IMR-90 (cell line): ENCODE measurements at regions of chr20 and their contacts with region 1.

Region 1: GRCh38 chr20:35664544-35665221 is at the starts of genes CPNE1 and RBM12:
- DNase-seq: peak; percentile 91
- ATAC-seq: peak; percentile 90
- H3K4me3 ChIP-seq: peak within 1 kb of the TSS; percentile 86
- H3K27ac ChIP-seq: peak within 1 kb of the TSS; percentile 94
- H3K4me1 ChIP-seq: peaks cover 2% of the 10 kb centered on the region
- H3K27me3 ChIP-seq: no peaks in the 10 kb centered on the region
- CTCF ChIP-seq: no peak
- POLR2A ChIP-seq: peak; percentile 97
- RAD21 ChIP-seq: no peak; the same call in 1 of the 2 replicates
- total RNA-seq, gene CPNE1: 141 and 163 TPM in 2 replicates
- total RNA-seq, gene RBM12: 65.8 and 69.4 TPM in 2 replicates

Region 2: DNA sequence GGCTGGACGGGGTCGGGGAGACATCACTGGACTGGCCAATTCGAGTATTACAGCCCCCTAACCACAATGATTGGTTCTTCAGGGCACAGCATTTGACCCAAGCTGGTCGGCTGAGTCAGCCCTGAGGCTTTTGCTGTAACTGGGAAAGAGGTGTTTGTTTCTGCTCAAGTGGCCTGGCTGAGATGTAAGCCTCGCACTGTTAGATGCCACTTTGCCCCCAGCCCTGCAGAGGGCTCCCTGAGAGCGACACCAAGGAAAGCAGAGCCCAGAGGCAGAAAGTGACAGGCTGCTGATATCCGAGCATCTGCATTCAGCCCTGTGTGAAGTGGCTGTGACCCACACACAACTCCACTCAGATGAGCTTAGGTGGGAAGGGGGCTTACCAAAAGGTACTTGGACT is 103.4 kb before region 1 on chr20:
- CTCF ChIA-PET with region 1: no interaction called
- POLR2A ChIA-PET with region 1: no interaction called
- dilution Hi-C with region 1: no loop called
- in situ Hi-C with region 1: no loop called
- intact Hi-C with region 1: loop called (anchors 10 kb)
- DNase-seq: peak; percentile 59
- ATAC-seq: peak; percentile 96
- H3K4me3 ChIP-seq: no peak overlapping the region
- H3K27ac ChIP-seq: no peak overlapping the region
- H3K4me1 ChIP-seq: peaks cover 2% of the 10 kb centered on the region
- H3K27me3 ChIP-seq: no peaks in the 10 kb centered on the region
- CTCF ChIP-seq: peak; percentile 40
- POLR2A ChIP-seq: no peak
- RAD21 ChIP-seq: peak; percentile 47

Region 3: GRCh38 chr20:35652641-35653429 is 11.8 kb before region 1 on chr20:
- CTCF ChIA-PET with region 1: no interaction called
- POLR2A ChIA-PET with region 1: no interaction called
- dilution Hi-C with region 1: no loop called
- in situ Hi-C with region 1: no loop called
- intact Hi-C with region 1: no loop called
- DNase-seq: no peak
- ATAC-seq: no peak
- H3K4me3 ChIP-seq: no peak overlapping the region
- H3K27ac ChIP-seq: no peak overlapping the region
- H3K4me1 ChIP-seq: peaks cover 9% of the 10 kb centered on the region
- H3K27me3 ChIP-seq: no peaks in the 10 kb centered on the region
- CTCF ChIP-seq: no peak
- POLR2A ChIP-seq: no peak
- RAD21 ChIP-seq: no peak

Region 4: DNA sequence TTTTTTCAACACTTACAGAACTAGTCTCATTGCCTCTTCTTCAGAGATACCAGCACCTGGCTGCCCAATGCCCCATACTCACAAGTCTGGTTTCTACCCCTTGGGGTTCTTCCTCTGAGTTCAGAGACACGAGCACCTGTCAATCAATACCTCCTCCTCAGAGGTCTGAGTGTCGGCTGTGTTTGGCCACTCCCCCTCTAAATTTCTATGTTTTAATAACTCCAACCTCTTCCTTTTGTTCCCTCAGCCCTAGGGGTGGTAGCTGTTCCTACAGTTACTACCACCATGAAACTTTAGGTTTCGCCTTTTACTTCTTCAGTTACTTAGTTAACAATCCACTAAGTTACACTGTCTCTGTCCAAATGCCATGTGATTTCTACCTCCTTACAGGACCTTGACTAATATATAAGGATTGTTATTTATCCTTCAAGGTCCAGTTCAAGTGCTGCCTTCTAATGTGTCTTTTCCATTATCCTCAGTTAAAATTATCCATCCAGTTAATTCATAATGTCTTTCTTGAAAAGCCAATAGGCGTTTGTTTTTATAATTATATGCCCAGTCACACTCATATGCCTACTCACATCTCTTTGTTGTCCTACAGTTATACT is 92.5 kb after region 1 on chr20:
- CTCF ChIA-PET with region 1: no interaction called
- POLR2A ChIA-PET with region 1: no interaction called
- dilution Hi-C with region 1: no loop called
- in situ Hi-C with region 1: no loop called
- intact Hi-C with region 1: no loop called
- DNase-seq: no peak
- ATAC-seq: peak; percentile 30
- H3K4me3 ChIP-seq: no peak overlapping the region
- H3K27ac ChIP-seq: no peak overlapping the region
- H3K4me1 ChIP-seq: peaks cover 4% of the 10 kb centered on the region
- H3K27me3 ChIP-seq: peaks cover 7% of the 10 kb centered on the region
- CTCF ChIP-seq: no peak
- POLR2A ChIP-seq: no peak
- RAD21 ChIP-seq: no peak